CD4-positive, alpha-beta T cell (primary cell): ENCODE measurements at regions of chr7 and their contacts with region 1.

Region 1: DNA sequence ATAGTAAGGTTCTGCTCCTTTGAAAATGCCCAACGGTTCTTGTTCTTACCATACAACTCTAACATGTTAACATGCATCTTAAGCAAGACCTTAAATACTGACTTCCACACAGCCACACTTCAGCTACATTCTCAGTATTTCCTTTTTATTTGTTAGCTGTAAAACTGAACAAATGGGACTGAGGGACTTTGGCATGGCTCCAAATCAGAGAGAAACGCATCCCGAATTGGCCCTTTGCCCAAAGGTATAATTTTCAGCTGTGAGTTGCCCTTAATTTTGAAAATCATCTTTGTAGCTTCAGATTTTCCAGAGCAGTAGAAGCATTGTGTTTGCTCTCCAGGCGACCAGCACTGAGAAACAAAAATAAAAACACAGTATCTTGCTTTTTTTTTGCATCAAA is 56.4 kb downstream of the NEUROD6 start:
- DNase-seq: no peak
- ATAC-seq: no peak
- H3K4me3 ChIP-seq: no peak overlapping the region
- H3K4me3 Mint-ChIP-seq: no peak overlapping the region
- H3K27ac ChIP-seq: no peak overlapping the region
- H3K27ac Mint-ChIP-seq: no peak overlapping the region
- H3K4me1 ChIP-seq: no peaks in the 10 kb centered on the region
- H3K4me1 Mint-ChIP-seq: no peaks in the 10 kb centered on the region
- H3K27me3 ChIP-seq: no peaks in the 10 kb centered on the region
- H3K27me3 Mint-ChIP-seq: no peaks in the 10 kb centered on the region
- CTCF ChIP-seq: no peak

Region 2: GRCh38 chr7:31228957-31229356 is 55.1 kb before region 1 on chr7:
- CTCF ChIA-PET with region 1: no interaction called
- POLR2A ChIA-PET with region 1: no interaction called
- intact Hi-C with region 1: loop called in 1 of 2 experiments (anchors 10 kb)
- DNase-seq: no peak
- ATAC-seq: no peak
- H3K4me3 ChIP-seq: no peak overlapping the region
- H3K4me3 Mint-ChIP-seq: no peak overlapping the region
- H3K27ac ChIP-seq: no peak overlapping the region
- H3K27ac Mint-ChIP-seq: no peak overlapping the region
- H3K4me1 ChIP-seq: no peaks in the 10 kb centered on the region
- H3K4me1 Mint-ChIP-seq: no peaks in the 10 kb centered on the region
- H3K27me3 ChIP-seq: no peaks in the 10 kb centered on the region
- H3K27me3 Mint-ChIP-seq: peaks cover 11% of the 10 kb centered on the region
- CTCF ChIP-seq: no peak

Region 3: GRCh38 chr7:31302356-31302755 is 18.2 kb after region 1 on chr7:
- CTCF ChIA-PET with region 1: no interaction called
- POLR2A ChIA-PET with region 1: no interaction called
- intact Hi-C with region 1: no loop called
- DNase-seq: no peak
- ATAC-seq: no peak
- H3K4me3 ChIP-seq: no peak overlapping the region
- H3K4me3 Mint-ChIP-seq: no peak overlapping the region
- H3K27ac ChIP-seq: no peak overlapping the region
- H3K27ac Mint-ChIP-seq: no peak overlapping the region
- H3K4me1 ChIP-seq: no peaks in the 10 kb centered on the region
- H3K4me1 Mint-ChIP-seq: no peaks in the 10 kb centered on the region
- H3K27me3 ChIP-seq: no peaks in the 10 kb centered on the region
- H3K27me3 Mint-ChIP-seq: peaks cover 10% of the 10 kb centered on the region
- CTCF ChIP-seq: no peak